Left ventricle myocardium inferior (tissue), 1 donor: ENCODE measurements at regions of chr17 and their contacts with region 1.

Region 1: DNA sequence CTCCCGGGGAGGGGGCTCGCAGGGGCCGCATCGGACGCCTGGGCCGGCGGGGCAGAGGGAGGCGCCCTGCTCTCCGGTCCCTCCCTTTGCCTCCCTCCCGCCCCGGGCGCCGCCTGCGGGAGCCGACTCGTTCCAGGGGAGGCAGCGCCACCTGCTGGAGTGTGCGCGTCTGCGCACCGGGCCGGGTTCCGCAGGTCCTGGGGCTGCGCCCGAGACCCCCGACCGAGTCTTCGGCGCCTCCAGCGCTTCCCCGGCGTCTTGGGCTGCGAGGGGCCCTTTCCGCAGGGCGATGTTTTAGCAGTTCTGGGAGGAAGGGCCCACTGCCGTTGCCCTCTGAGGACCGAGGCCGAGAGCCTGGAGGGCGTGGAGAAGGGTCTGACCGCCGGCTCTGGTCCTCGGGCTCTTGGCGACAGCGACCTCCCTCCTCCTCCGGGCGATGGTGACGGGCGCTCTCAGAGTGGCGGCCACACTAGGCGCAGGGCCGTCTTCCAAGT is 106.3 kb downstream of the SEC14L1 start:
- DNase-seq: peak; percentile 87
- H3K4me3 ChIP-seq: peak overlapping the region; percentile 71
- H3K27ac ChIP-seq: peak overlapping the region; percentile 55
- H3K4me1 ChIP-seq: peaks cover 24% of the 10 kb centered on the region
- H3K27me3 ChIP-seq: peaks cover 12% of the 10 kb centered on the region
- CTCF ChIP-seq: peak; percentile 98

Region 2: DNA sequence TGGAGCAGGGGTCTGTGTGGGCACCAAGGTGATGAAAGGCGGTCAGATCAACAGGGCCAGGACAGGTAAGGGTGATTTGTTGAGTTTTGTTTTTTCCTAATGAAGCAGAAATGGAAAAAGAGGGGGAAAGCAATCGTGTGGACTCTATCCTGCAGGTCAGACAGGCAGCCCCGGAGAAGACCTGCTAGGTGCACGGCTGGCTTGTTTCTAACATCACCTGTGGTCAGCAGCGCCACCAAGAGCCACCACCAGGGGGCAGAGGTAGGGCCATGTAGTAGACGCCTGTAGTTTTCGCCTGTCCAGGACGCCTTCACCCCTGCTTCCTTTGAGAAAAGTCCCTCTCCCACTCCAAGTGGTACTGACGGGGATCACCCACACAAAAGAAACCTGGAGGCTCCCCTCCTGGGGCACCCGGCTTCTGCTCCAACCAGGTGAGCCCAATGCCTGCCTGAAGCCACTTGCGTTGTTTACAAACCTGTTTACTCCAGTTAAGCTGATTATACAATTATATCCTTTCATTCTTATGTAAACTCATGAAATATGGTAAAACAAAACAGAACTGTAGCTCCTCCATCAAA is 160.6 kb before region 1 on chr17:
- intact Hi-C with region 1: loop called (anchors 2 kb)
- DNase-seq: peak; percentile 89
- H3K4me3 ChIP-seq: no peak overlapping the region
- H3K27ac ChIP-seq: no peak overlapping the region
- H3K4me1 ChIP-seq: peaks cover 50% of the 10 kb centered on the region
- H3K27me3 ChIP-seq: no peaks in the 10 kb centered on the region
- CTCF ChIP-seq: peak; percentile 95

Region 3: GRCh38 chr17:77280980-77281903 is 34.1 kb after region 1 on chr17:
- intact Hi-C with region 1: no loop called
- DNase-seq: peak; percentile 43
- H3K4me3 ChIP-seq: peak overlapping the region; percentile 66
- H3K27ac ChIP-seq: no peak overlapping the region
- H3K4me1 ChIP-seq: peaks cover 29% of the 10 kb centered on the region
- H3K27me3 ChIP-seq: peaks cover 50% of the 10 kb centered on the region
- CTCF ChIP-seq: peak; percentile 39